Panc1 (cell line): ENCODE measurements at regions of chr17 and their contacts with region 1.

Region 1: GRCh38 chr17:44607836-44608690 is 48.2 kb upstream of the MEIOC start:
- DNase-seq: no peak
- ATAC-seq: no peak; the same call in 1 of the 2 replicates
- H3K4me3 ChIP-seq: no peak overlapping the region
- H3K27ac ChIP-seq: no peak overlapping the region
- H3K4me1 ChIP-seq: no peaks in the 10 kb centered on the region; the same call in 1 of the 2 replicates
- H3K27me3 ChIP-seq: no peaks in the 10 kb centered on the region
- CTCF ChIP-seq: no peak

Region 2: DNA sequence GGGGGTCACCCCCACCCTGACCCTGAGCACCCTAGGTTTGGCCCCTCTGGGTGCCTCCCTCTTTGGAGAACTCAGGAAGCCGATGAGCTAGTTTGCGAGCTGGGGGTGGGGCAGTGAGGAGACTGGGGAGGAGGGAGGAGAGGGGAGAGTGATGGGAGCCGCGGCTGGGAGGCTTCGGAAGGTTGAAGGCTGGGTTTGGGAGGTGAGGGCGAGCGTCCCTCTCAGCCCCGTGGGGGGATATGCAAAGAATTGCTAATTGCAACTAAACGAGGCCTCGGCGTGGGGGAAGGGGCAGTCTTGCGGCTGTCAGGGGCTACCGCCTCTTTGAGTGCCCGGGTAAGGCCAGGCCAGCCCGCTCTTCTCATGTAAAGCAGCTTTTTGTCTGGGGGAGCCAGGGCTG is 68.4 kb before region 1 on chr17:
- CTCF ChIA-PET with region 1: no interaction called
- POLR2A ChIA-PET with region 1: interaction called, 10 read pairs
- in situ Hi-C with region 1: no loop called
- intact Hi-C with region 1: no loop called
- DNase-seq: no peak
- ATAC-seq: no peak
- H3K4me3 ChIP-seq: no peak overlapping the region
- H3K27ac ChIP-seq: peak overlapping the region; percentile 93
- H3K4me1 ChIP-seq: peaks cover 51% of the 10 kb centered on the region
- H3K27me3 ChIP-seq: no peaks in the 10 kb centered on the region
- CTCF ChIP-seq: no peak